WTC11 (cell line): ENCODE measurements at regions of chr6 and their contacts with region 1.

Region 1: DNA sequence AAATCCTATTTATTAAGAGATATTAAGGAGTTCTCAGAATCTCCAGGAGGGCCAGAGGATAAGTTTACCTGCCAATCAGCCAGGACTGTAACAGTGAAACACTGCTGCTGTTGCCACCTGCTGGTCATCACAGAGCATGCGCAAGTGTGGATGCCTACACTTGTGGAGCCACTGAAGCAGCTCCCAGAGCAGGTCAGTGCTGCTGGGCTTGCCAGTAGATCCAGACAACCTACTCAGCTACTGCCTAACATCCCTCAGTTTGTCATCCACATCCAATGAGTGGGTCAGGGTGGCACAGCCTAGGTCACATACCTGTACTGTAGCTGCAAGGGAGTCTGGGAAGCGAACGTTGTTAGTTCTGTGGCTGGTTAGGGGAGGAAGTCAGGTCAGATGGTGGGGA is 18.3 kb upstream of the NHSL1 start:
- DNase-seq: peak; percentile 66
- ATAC-seq: peak; percentile 94
- H3K4me3 Mint-ChIP-seq: no peak overlapping the region
- H3K27ac Mint-ChIP-seq: peak overlapping the region; percentile 90
- H3K4me1 Mint-ChIP-seq: peaks cover 21% of the 10 kb centered on the region
- H3K27me3 Mint-ChIP-seq: no peaks in the 10 kb centered on the region; the same call in 1 of the 2 replicates
- CTCF ChIP-seq: peak; percentile 76

Region 2: GRCh38 chr6:138422861-138423260 is 94.8 kb before region 1 on chr6:
- CTCF ChIA-PET with region 1: interaction called, 12 read pairs
- POLR2A ChIA-PET with region 1: no interaction called
- DNase-seq: no peak
- ATAC-seq: no peak
- H3K4me3 Mint-ChIP-seq: no peak overlapping the region
- H3K27ac Mint-ChIP-seq: no peak overlapping the region
- H3K4me1 Mint-ChIP-seq: no peaks in the 10 kb centered on the region
- H3K27me3 Mint-ChIP-seq: no peaks in the 10 kb centered on the region
- CTCF ChIP-seq: no peak

Region 3: DNA sequence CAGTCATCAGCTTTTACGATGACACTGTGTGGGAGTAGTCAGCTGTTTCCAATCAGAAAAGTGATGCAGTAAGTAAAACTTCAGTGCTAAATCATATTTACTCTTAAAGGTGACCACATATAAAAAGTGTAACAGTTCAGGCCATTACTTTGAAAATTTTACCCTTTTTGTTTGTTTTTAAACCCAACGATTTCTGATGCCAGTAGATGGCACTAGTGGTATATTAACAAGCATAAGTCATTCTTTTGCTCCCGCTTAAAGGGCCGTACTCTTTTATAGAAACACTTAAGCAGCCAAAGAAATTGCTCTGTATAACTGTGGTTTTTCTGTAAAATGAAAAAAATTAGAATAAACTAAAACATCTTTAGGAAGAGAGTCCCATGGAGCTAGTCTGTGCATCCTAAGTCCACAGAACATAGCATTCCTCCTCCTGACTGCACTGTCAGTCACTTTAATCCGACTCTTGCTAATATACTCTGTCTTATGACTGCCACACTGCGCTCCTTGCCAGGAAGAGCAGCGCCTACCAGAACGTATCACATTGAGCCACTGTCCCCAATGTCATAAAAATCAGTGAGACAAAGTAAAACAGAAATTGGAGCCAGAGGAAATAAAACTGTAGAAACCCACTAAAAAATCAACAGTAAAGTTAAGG is 88.6 kb before region 1 on chr6:
- CTCF ChIA-PET with region 1: interaction called, 12 read pairs
- POLR2A ChIA-PET with region 1: no interaction called
- DNase-seq: no peak
- ATAC-seq: no peak
- H3K4me3 Mint-ChIP-seq: no peak overlapping the region
- H3K27ac Mint-ChIP-seq: peak overlapping the region; percentile 90; the same call in 1 of the 2 replicates
- H3K4me1 Mint-ChIP-seq: peaks cover 9% of the 10 kb centered on the region; the same call in 1 of the 2 replicates
- H3K27me3 Mint-ChIP-seq: no peaks in the 10 kb centered on the region
- CTCF ChIP-seq: no peak

Region 4: GRCh38 chr6:138446821-138447220 is 70.8 kb before region 1 on chr6:
- CTCF ChIA-PET with region 1: no interaction called
- POLR2A ChIA-PET with region 1: no interaction called
- DNase-seq: no peak
- ATAC-seq: no peak
- H3K4me3 Mint-ChIP-seq: no peak overlapping the region
- H3K27ac Mint-ChIP-seq: no peak overlapping the region
- H3K4me1 Mint-ChIP-seq: no peaks in the 10 kb centered on the region
- H3K27me3 Mint-ChIP-seq: no peaks in the 10 kb centered on the region
- CTCF ChIP-seq: no peak